Activated B cell treated with CpG ODN at 0.5 μM for 24 hours (primary cell): ENCODE measurements at regions of chr19 and their contacts with region 1.

Region 1: DNA sequence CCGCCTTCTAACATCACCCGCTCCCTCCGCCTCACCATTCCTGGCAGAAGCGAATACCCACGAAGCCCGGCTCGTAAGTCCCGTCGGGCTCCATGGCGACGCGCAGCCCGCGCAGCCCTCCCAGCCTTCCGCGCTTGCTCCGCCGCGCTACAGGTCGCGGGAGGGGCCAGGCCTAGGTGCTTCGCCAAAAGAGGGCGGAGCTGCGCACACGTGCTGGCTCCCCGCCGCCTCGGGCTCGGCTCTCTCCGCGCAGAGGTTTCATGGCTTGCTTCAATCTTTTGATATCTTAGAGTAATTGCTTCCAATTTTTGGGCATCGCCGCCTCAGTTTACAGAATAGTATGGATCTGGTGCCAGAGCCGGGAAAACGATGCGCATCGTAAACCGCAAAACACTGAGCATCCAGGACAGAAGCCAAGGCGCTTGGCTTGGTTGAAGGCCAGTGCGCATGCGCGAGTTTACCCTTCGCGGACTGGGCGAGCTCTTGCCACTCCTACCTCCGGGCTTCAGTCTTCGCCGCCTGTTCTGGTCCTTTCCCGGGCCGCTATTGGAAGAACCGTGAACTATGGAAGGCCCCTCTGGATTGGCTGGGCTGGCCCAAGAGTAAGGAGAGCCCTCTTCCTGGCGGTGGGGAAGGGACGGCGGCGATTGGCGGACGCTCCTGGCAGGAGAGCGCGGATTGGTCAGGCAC is at the start of gene POLR2I:
- DNase-seq: peak; percentile 93
- ATAC-seq: peak; percentile 86
- H3K4me3 Mint-ChIP-seq: peak within 1 kb of the TSS; percentile 92
- H3K27ac Mint-ChIP-seq: peak within 1 kb of the TSS; percentile 97
- H3K4me1 Mint-ChIP-seq: peaks cover 43% of the 10 kb centered on the region
- H3K27me3 Mint-ChIP-seq: no peaks in the 10 kb centered on the region
- CTCF ChIP-seq: no peak
- total RNA-seq, gene POLR2I: 46.6 and 51.6 TPM in 2 replicates

Region 2: DNA sequence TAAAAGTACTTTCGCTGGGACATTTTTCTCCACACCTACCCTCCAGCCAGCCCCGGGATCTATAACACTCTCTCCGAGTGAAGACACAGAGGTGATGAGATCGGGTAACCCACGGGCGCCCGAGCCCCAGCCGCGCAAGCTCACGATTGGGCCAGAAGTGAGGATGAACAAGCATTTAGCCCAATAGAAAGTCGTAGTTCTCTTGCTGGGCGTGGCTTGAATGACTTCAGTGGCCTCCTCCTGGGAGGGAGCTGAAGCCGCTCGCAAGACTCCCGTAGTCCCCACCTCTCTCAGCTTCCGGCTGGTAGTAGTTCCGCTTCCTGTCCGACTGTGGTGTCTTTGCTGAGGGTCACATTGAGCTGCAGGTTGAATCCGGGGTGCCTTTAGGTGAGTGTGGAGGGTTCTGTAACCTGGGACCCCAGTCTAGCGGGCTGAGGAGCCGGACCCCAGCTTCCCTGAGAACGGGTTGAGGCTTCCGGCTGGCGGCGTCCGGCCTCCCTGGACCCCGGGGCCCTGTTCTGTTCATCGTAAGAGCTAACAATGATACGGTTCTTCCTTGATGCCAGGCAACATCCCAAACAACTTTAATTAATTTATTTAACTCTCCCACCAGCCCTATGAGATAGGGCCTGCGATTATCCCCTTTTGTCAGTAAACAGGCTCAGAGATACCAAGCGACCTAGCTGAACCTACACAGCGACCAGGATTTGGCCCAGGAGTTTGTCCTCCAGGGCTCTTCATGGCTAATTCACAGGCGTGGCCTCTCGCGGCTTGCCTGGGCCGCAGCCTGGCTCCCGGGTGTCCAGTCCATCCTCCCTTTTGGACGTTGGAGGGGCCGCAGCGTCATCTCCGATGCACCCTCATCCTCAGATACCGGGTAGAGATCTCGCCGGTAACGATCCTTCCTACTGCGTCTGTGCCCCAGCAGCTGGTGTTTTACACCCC is 466.6 kb before region 1 on chr19 and contains the start of gene COX6B1:
- CTCF ChIA-PET with region 1: no interaction called
- POLR2A ChIA-PET with region 1: interaction called, 10 read pairs
- intact Hi-C with region 1: loop called (anchors 10 kb)
- DNase-seq: peak; percentile 72
- ATAC-seq: peak; percentile 66
- H3K4me3 Mint-ChIP-seq: peak within 1 kb of the TSS; percentile 96
- H3K27ac Mint-ChIP-seq: peak within 1 kb of the TSS; percentile 87
- H3K4me1 Mint-ChIP-seq: peaks cover 37% of the 10 kb centered on the region
- H3K27me3 Mint-ChIP-seq: no peaks in the 10 kb centered on the region
- CTCF ChIP-seq: no peak
- total RNA-seq, gene COX6B1: 334 and 401 TPM in 2 replicates

Region 3: GRCh38 chr19:35931161-35931873 is 183.6 kb before region 1 on chr19:
- CTCF ChIA-PET with region 1: no interaction called
- POLR2A ChIA-PET with region 1: no interaction called
- intact Hi-C with region 1: loop called (anchors 10 kb)
- DNase-seq: peak; percentile 99
- ATAC-seq: peak; percentile 94
- H3K4me3 Mint-ChIP-seq: peak overlapping the region; percentile 72
- H3K27ac Mint-ChIP-seq: peak overlapping the region; percentile 87
- H3K4me1 Mint-ChIP-seq: peaks cover 48% of the 10 kb centered on the region
- H3K27me3 Mint-ChIP-seq: peaks cover 4% of the 10 kb centered on the region
- CTCF ChIP-seq: no peak

Region 4: DNA sequence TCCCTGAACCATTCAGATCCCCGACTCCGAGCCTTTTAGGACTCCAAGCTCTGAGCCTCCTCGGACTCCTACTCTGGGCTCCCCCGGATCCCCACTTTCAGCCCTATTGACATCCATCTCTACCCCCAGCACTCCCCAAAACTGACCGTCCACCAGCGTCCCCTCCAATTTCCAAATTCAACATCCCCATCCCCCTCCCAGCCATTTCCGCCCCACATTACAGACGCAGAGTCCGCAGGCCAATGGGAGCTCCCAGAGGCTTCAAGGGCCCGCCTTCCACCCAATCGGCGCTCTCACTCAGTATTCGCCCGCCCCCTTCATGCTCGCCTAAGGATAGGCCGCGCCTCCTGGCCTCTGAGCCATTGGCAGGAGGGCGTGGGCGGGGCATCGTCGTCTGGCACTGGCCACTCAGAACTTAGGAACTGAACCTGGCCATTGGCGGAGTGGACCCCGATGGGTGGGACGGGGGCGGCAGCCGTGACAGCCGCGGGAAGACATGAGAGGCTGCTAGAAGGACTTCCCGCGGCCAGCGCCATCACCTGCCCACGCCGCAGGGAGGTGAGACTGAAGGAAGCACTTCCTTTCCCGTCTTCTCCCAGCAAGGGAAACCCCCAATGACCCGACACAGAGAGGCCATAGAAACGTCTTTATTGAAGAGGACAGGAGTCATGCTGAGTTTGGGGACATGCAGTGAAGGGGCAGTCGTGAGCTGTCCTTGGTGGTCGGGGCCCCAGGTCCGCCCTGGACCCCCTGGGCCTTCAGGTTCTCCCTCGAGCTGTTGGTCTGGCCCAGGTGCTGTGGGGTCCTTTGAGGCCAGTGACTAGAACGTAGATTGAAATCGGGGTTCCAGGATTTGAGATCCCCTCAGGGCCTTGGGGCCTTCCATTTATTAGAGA is 100.6 kb before region 1 on chr19 and contains the start of gene ALKBH6:
- CTCF ChIA-PET with region 1: no interaction called
- POLR2A ChIA-PET with region 1: interaction called, 9 read pairs
- intact Hi-C with region 1: loop called (anchors 1 kb)
- DNase-seq: peak; percentile 94
- ATAC-seq: peak; percentile 99
- H3K4me3 Mint-ChIP-seq: peak within 1 kb of the TSS; percentile 98
- H3K27ac Mint-ChIP-seq: peak within 1 kb of the TSS; percentile 95
- H3K4me1 Mint-ChIP-seq: peaks cover 29% of the 10 kb centered on the region
- H3K27me3 Mint-ChIP-seq: no peaks in the 10 kb centered on the region
- CTCF ChIP-seq: no peak
- total RNA-seq, gene ALKBH6: 32.7 and 39.7 TPM in 2 replicates

Region 5: DNA sequence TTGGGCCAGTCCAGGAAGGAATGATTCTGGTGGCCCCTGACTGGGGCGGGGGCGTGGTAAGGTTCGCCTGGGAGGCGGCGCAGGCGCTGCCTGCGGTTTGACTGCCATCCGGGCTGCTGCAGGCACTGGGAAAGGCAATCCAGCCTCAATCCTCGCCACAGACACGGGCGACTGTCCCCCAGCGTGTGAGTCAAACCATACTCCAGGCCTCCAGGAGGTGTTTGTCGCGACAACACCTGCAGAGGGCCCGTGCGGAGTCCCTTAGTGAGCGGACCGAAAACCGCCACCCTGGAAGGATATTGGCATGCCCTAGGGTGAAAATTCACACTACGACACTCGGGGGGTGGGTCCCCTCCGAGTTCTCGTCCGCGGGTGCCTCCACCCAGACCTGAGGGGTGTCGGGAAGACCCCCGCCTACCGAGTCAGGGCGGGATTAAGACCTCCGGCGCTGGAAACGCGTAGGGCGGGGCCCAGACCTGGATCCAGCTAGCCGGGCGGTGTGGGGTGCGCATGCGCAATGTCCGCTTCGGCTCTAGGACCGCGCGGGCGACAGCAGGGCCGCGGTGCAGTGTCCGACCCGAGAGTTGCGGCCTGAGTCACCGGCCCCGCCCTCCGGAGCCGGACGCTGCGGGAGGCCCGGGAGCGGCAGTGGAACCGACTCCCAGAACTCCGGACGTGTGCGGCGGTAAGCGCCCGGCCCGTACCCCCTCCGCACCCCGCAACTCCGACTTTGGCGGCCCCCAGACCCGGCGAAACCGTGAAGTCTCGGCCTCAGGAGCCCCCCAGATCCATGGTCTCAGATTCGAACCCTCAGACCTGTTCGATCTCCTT is 24.8 kb after region 1 on chr19 and contains the start of gene CAPNS1:
- CTCF ChIA-PET with region 1: no interaction called
- POLR2A ChIA-PET with region 1: interaction called, 18 read pairs
- intact Hi-C with region 1: loop called (anchors 1 kb)
- DNase-seq: peak; percentile 93
- ATAC-seq: peak; percentile 76
- H3K4me3 Mint-ChIP-seq: peak within 1 kb of the TSS; percentile 97
- H3K27ac Mint-ChIP-seq: peak within 1 kb of the TSS; percentile 97
- H3K4me1 Mint-ChIP-seq: peaks cover 16% of the 10 kb centered on the region
- H3K27me3 Mint-ChIP-seq: peaks cover 2% of the 10 kb centered on the region
- CTCF ChIP-seq: no peak
- total RNA-seq, gene CAPNS1: 442 and 477 TPM in 2 replicates

Region 6: DNA sequence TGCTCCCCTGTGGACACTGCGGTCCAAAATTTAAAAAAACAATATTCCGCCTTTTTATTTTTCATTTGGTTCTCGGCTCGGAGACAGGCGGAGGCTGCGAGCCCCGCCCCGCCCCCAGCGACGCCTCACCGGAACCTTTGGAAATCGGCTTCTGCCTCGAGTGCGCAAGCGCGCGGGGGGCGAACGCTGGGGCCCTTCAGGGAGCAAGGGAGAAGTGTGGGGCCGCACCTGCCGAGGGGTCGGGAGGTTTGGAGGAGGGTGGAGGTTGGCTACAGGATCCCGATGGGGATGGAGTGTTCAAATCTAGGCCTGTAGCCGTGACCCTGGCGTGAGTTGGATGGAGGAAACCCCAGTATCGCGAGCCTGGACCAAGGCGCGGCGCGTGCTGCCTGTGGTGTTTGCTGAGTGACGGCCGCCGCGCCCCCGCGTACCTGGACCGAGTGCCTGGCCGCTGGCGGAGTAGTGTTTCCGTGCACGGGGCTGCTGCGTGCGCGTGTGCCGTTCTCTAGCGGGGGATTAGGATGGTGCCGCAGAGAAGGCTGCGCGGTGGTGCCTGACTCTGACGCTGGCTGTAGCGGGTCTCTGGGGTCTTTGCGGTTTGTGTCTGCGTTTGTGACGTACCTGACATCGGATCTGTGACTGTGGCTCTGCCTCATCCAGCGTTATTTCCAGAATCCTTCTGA is 1540.9 kb after region 1 on chr19:
- CTCF ChIA-PET with region 1: no interaction called
- POLR2A ChIA-PET with region 1: no interaction called
- intact Hi-C with region 1: loop called (anchors 10 kb)
- DNase-seq: peak; percentile 80
- ATAC-seq: peak; percentile 67
- H3K4me3 Mint-ChIP-seq: peak overlapping the region; percentile 95
- H3K27ac Mint-ChIP-seq: peak overlapping the region; percentile 95
- H3K4me1 Mint-ChIP-seq: peaks cover 28% of the 10 kb centered on the region
- H3K27me3 Mint-ChIP-seq: no peaks in the 10 kb centered on the region
- CTCF ChIP-seq: no peak